KBM-7 (cell line): ENCODE measurements at regions of chr20 and their contacts with region 1.

Region 1: DNA sequence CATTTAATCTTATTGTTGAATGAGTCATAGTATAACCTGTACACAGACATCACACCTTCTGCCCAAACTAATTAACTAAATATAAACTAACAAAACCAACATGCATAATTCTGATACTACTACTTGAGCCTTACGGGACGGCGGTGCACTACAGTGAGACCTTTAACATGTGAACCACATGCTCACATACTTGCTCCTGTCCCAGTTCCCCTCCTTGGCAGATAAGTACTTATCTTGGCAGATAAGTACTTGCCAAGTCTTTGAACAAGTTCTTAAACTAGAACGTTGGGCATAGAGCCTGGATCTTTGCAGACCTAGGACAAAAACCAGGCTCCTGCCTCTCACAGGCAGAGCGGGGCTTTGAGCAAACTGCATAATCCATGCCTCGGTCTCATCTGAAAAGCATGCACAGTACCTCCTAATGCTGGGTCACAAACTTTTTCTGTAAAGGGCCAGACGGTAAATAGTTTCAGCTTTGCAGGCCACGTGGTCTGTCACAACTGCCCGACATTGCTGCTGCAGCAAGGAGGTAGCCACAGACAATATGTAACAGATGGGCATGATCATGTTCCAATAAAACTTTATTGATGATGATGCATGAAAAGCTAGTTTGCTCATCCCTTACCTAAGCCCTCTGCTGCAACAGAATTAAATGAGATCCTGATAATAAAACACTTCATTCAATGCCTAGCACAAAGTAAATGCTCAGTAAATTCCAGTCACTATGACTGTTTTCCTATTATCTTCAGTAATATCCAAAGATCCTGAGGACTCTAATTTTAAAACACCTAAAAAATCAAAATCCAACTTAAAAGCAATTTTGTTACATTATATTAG is 22.9 kb downstream of the ZNF217 start:
- DNase-seq: no peak

Region 2: GRCh38 chr20:53009979-53010735 is 560.6 kb before region 1 on chr20:
- in situ Hi-C with region 1: no loop called
- DNase-seq: no peak

Region 3: DNA sequence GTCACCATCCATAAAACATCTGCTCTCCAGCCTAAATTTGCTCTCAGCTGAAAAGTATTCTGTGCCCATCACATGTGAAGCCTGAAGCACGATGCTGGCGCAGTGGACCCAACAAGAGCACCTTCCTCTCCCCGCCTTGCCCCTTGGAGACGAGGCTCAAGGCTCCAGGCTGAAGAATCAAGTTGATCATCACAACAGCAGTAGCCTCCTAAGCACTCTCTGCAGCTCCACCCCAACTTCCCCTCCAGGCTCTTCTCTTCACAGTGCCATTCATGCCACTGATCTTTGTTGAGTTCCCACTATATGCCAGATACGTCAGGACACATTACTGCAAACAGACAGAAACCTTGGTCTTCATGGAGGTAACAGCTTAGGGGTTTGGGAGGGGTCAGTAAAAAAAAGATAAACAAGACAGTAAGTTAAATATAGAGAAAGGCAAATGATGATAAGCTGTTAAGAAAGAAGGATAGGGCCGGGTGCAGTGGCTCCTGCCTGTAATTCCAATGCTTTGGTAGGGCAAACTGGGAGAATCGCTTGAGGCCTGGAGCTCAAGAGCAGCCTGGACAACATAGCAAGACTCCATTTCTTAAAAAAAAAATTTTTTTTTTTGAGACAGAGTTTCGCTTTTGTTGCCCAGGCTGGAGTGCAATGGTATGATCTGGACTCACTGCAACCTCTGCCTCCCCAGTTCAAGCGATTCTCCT is 64.6 kb after region 1 on chr20:
- in situ Hi-C with region 1: no loop called
- DNase-seq: no peak

Region 4: DNA sequence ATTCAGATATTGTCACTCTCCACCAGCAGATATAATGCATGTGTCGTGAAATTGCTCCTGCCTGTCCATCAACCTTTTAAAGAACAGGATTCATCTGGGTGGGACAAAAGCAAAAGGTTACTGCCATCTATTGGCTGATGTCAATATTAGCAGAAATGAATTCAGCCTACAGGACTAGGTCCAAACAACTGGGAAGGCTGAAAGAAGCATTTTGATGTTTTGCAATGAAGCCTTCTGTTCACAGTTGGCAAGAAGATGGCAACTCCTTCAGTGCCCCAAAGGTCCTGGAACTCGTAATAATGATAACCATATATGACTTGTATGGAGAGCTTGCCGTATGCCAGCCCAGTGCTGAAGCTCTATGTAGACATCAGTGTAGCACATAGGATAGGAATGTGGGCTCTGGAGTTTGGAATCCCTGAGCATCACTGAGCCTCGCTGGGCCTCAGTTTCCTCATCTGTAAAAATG is 492.1 kb after region 1 on chr20:
- in situ Hi-C with region 1: loop called (anchors 25 kb)
- DNase-seq: peak; percentile 63